ENCODE measurements at regions of chr18 and their contacts with region 1.

Region 1: DNA sequence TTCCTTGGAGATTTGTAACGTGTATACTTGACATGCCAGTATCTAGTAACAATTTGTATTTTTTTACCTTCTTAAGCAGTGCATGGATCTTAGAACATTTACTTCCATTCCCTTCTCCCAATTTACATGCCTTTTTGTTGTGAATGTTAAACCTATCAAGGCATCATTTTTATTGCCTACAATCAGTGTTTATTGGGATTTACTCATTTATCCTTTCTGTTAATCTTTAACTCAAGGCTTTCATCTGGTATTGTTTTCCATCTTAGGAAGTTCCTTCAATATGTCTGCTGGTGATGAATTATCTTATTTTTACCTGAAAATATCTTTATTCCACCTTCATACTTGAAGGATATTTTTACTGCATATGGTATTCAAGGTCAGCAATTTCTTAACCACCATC is 88.5 kb upstream of the EMILIN2 start:
- DNase-seq: no peak
- H3K4me3 ChIP-seq: no peak overlapping the region
- H3K27ac ChIP-seq: no peak overlapping the region
- H3K4me1 ChIP-seq: no peaks in the 10 kb centered on the region
- H3K27me3 ChIP-seq: no peaks in the 10 kb centered on the region
- CTCF ChIP-seq: no peak
- POLR2A ChIP-seq: no peak

Region 2: DNA sequence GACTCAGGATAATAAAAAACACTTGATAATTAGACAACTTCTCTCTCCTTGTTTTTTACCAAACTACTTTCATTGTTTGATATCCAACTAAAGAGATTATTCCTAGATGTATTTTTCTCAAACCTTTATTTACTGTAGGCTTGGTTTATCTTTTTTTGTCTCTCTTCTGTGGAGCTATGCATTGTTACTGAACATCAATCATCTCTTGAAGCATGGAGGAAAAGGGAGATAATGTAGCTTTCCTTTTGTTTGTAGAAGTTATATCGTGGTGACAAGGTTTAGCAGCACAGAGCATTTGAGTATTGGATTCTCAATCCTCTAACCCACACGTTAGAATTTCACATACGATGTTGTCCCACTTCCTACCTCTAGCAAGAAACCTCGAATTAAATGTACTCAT is 61.1 kb before region 1 on chr18:
- intact Hi-C with region 1: no loop called
- DNase-seq: no peak
- H3K4me3 ChIP-seq: no peak overlapping the region
- H3K27ac ChIP-seq: no peak overlapping the region
- H3K4me1 ChIP-seq: no peaks in the 10 kb centered on the region
- H3K27me3 ChIP-seq: no peaks in the 10 kb centered on the region
- CTCF ChIP-seq: no peak
- POLR2A ChIP-seq: no peak

Region 3: DNA sequence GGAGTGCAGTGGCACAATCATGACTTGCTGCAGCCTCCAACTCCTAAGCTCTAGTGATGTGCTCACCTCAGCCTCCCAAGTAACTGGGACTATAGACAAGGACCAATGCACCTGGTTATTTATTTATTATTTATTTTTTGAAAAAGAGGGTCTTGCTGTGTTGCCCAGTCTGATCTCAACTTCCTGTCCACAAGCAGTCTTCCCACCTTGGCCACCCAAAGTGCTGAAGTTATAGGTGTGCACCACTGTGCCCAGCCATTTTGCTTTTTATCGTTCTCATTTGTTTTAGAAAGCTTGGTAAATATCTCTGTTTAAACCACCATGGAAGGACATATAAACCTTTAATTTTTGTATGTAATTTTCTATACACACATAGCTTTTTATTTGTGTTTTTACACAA is 28.6 kb before region 1 on chr18:
- intact Hi-C with region 1: no loop called
- DNase-seq: no peak
- H3K4me3 ChIP-seq: no peak overlapping the region
- H3K27ac ChIP-seq: no peak overlapping the region
- H3K4me1 ChIP-seq: no peaks in the 10 kb centered on the region
- H3K27me3 ChIP-seq: no peaks in the 10 kb centered on the region
- CTCF ChIP-seq: no peak
- POLR2A ChIP-seq: no peak

Region 4: DNA sequence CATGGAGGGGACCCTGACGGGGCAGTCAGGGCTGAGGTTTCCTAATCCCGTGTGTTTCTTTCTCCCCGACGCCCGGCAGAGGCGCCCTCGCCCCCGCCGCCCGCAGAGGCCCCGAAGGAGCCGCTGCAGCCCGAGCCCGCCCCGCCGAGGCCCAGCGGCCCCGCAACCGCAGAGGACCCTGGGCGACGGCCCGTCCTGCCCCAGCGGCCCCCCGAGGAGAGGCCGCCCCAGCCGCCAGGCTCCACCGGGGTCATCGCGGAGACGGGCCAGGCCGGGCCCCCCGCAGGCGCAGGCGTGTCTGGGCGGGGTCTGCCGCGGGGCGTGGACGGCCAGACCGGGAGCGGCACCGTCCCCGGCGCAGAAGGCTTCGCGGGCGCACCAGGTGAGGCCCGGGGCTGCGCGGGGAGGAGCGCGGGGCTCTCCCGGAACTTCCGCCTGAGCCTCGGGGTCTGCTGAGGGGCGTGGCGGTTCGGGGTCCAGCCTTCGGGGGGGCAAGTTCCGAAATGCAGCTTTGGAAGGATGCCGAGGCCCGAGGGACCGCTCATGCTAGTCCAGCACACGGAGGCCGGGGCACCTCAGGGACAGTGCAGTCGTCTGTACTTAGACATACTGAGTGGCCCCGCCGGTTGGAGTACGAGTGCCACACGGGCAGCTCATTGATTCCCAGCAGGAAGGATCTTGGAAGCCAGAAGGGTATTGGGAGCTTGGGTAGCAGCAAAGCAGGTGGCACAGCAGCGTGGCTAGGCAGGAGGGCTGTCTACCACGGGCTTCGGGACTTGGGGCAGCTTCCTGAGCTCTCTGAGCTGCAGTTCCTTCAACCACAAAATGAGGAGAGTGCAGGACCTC is 148.6 kb after region 1 on chr18:
- intact Hi-C with region 1: loop called (anchors 10 kb)
- DNase-seq: no peak
- H3K4me3 ChIP-seq: peak overlapping the region; percentile 55 to 70
- H3K27ac ChIP-seq: peak overlapping the region; percentile 91
- H3K4me1 ChIP-seq: peaks cover 37% of the 10 kb centered on the region
- H3K27me3 ChIP-seq: no peaks in the 10 kb centered on the region
- CTCF ChIP-seq: no peak
- POLR2A ChIP-seq: no peak

Region 5: DNA sequence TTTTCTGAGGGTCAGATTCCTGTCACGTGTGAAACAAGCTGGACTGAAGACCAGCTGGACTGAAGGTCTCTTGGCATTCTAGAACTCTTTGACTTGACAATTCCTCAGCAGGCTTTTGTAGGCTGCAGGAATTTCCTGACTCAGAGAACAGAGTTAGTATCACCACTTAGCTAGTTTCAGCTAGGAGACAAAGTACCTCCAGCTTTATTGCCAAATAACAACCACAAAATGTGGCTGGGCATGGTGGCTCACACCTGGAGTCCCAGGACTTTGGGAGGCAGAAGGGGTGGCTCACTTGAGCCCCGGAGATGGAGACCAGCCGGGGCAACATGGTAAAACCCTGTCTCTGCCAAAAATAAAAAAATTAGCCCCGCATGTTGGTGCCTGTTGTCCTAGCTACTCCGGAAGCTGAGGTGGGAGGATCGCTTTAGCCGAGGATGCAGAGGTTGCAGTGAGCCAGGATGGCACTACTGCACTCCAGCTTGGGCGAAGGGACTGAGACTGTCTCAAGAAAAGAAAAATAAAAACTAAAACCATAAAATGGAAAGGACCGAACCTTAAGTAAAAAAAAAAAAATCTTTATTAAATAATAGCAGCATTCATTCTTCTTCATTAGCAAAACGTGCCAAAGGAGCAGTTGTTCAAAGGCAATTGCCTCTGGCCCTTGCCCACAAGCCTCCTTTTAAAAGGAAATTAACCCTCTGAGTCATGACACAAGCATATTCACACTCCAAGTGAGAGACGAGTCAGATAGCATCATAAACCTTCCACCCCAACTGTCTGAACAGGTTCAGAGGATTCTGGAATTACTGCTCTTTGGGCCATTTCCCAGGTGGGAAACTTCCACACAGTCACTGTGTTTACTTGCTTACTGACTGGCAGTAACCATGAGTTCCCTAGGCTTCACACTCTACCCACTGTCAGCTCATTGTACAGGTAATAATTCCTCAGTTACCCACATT is 592.5 kb after region 1 on chr18:
- intact Hi-C with region 1: no loop called
- DNase-seq: no peak
- H3K4me3 ChIP-seq: no peak overlapping the region
- H3K27ac ChIP-seq: no peak overlapping the region
- H3K4me1 ChIP-seq: peaks cover 10% of the 10 kb centered on the region
- H3K27me3 ChIP-seq: no peaks in the 10 kb centered on the region
- CTCF ChIP-seq: no peak
- POLR2A ChIP-seq: no peak